Activated naive CD4-positive, alpha-beta T cell treated with anti-CD3 and anti-CD28 coated beads for 36 hours (primary cell): ENCODE measurements at regions of chr3 and their contacts with region 1.

Region 1: GRCh38 chr3:72426618-72427397 is 421.4 kb downstream of the SHQ1 start:
- DNase-seq: no peak
- H3K4me3 Mint-ChIP-seq: no peak overlapping the region
- H3K27ac Mint-ChIP-seq: no peak overlapping the region
- H3K4me1 Mint-ChIP-seq: peaks cover 70% of the 10 kb centered on the region
- H3K27me3 Mint-ChIP-seq: no peaks in the 10 kb centered on the region

Region 2: GRCh38 chr3:72375237-72376076 is 51.4 kb before region 1 on chr3:
- CTCF ChIA-PET with region 1: no interaction called
- intact Hi-C with region 1: loop called (anchors 1 kb)
- DNase-seq: peak; percentile 70
- H3K4me3 Mint-ChIP-seq: peak overlapping the region; percentile 20
- H3K27ac Mint-ChIP-seq: peak overlapping the region; percentile 82
- H3K4me1 Mint-ChIP-seq: peaks cover 62% of the 10 kb centered on the region
- H3K27me3 Mint-ChIP-seq: no peaks in the 10 kb centered on the region

Region 3: DNA sequence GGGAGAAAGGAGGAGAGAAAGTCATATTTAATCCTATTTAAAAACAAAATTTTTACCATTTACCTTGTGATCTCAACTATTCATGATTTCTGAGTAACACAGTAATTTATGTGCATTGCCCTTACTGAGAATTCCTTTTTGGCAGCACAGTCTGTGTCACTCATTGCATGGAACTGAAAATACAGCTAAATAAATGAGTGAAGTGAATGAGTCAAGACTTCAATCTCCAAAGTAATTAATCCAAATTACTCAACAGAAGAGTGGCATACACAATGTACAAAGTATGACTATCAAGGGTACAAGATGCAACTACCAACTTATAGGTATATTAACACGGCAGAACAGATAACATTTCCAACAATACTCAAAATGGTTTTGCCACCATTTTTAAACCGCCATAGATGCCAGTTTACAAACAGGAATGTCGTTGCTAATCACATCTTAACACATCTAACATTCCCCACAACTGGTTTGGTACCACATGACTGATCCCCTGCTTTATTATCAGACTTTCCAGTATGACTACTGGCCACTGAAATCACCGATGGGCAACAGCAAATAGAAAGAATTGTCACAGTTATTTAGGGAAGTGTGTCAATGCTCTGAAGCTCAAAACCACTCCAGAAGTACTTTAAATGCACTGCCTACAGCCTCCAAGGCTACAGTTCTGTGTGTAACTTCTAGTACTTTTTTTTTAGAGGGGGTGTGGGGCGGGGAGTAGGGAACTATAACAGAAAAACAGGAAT is 11.0 kb after region 1 on chr3:
- CTCF ChIA-PET with region 1: no interaction called
- intact Hi-C with region 1: loop called (anchors 1 kb)
- DNase-seq: no peak
- H3K4me3 Mint-ChIP-seq: no peak overlapping the region
- H3K27ac Mint-ChIP-seq: no peak overlapping the region
- H3K4me1 Mint-ChIP-seq: peaks cover 78% of the 10 kb centered on the region
- H3K27me3 Mint-ChIP-seq: no peaks in the 10 kb centered on the region

Region 4: DNA sequence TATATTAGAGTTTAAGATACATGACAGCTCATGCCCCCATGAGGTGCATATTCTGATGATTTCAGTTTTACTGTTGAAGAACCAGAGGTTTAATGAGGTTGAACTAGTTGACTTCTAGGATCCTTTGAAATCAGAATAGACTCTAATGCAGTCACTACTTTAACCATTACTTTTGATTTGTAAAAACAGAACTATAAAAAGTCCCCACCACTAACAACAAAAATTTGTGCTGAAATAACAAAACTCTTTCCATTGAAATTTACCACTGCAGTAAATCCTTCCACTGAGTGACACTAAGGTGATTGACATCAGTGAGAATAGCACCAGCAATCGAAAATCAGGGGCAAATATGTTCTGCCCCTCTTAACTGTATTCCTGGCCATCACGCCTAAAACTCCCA is 207.3 kb after region 1 on chr3:
- CTCF ChIA-PET with region 1: no interaction called
- intact Hi-C with region 1: loop called (anchors 5 kb)
- DNase-seq: peak; percentile 19
- H3K4me3 Mint-ChIP-seq: no peak overlapping the region
- H3K27ac Mint-ChIP-seq: no peak overlapping the region
- H3K4me1 Mint-ChIP-seq: peaks cover 39% of the 10 kb centered on the region
- H3K27me3 Mint-ChIP-seq: peaks cover 10% of the 10 kb centered on the region

Region 5: DNA sequence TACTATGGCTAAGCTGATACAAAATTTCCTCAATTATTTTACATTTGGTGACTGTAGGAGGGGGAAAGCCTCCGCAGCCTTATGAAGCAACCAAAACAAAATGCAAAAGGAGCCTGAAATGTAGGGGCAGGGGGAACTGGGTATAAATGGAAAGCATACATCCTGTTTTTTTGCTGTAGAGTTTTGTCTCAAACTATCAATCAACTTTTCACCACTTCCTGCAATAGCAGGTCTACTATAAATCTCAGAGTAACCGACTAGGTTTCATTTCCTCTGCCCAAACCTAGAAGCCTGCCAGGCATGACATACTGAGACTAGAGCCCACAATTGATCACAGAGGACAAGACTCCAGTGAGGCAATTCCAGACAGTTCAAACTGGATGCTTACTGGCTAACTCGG is 330.1 kb after region 1 on chr3:
- CTCF ChIA-PET with region 1: no interaction called
- intact Hi-C with region 1: loop called (anchors 5 kb)
- DNase-seq: peak; percentile 73
- H3K4me3 Mint-ChIP-seq: peak overlapping the region; percentile 17
- H3K27ac Mint-ChIP-seq: peak overlapping the region; percentile 83
- H3K4me1 Mint-ChIP-seq: peaks cover 74% of the 10 kb centered on the region
- H3K27me3 Mint-ChIP-seq: no peaks in the 10 kb centered on the region